PC-9 (cell line): ENCODE measurements at regions of chr2 and their contacts with region 1.

Region 1: DNA sequence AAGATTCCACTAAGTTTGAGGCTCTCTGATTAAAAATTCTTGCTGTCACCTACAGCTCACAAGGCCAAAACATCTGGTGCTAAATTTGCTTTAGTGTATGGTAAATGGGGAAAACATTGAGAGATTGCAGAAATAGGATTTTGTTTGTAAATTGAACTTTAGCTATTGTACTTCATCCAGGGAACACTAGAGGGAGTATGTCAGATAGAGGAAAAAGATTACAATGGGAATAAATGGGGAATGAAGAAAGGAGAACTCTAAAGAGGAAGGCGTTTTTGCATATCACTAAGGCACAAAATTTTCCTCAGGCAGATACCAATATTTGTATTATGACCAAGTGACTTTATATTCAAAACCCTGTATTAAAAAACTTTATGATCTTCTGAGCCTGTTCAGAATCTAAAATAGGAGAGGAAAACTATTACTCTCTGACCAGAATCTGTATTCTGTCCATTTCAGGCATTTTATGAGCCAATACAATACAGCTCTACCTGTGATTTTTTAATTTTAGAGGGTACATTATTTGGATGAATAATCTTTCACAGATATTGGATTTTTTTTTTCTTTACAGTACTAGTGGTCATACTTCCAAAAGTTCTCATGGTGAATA is 52.3 kb upstream of the ITGB6 start:
- DNase-seq: no peak
- H3K4me3 ChIP-seq: no peak overlapping the region
- H3K27ac ChIP-seq: no peak overlapping the region
- H3K4me1 ChIP-seq: peaks cover 20% of the 10 kb centered on the region
- H3K27me3 ChIP-seq: no peaks in the 10 kb centered on the region
- CTCF ChIP-seq: peak; percentile 81

Region 2: DNA sequence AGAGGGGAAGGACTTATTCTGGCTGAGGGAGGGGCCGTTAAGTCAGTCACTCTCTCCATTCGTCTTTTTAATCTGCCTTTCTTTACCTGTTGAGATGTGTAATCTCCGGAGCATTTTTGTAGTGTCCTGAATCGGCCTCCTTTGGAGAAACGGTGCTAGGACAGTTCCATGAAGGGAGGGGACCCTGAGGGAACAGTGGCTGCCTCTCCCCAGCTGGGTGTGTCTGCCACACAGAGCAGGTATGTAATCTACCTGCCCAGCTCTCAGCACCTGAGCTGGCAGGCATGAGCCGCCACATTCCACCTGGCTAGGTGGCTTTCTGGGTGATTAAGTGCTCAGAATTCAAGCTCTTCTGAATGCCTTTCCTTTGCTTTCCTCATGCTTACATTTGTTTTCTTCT is 1097.1 kb before region 1 on chr2:
- CTCF ChIA-PET with region 1: no interaction called
- POLR2A ChIA-PET with region 1: interaction called, 10 read pairs
- intact Hi-C with region 1: no loop called
- DNase-seq: peak; percentile 79 to 92
- H3K4me3 ChIP-seq: peak overlapping the region; percentile 20; the same call in 1 of the 2 replicates
- H3K27ac ChIP-seq: peak overlapping the region; percentile 86
- H3K4me1 ChIP-seq: peaks cover 61% of the 10 kb centered on the region
- H3K27me3 ChIP-seq: no peaks in the 10 kb centered on the region
- CTCF ChIP-seq: no peak

Region 3: GRCh38 chr2:160224060-160224459 is 28.3 kb before region 1 on chr2:
- CTCF ChIA-PET with region 1: no interaction called
- POLR2A ChIA-PET with region 1: interaction called, 5 read pairs
- intact Hi-C with region 1: loop called (anchors 2 kb)
- DNase-seq: peak in 1 of 2 experiments; percentile 93
- H3K4me3 ChIP-seq: no peak overlapping the region
- H3K27ac ChIP-seq: peak overlapping the region; percentile 100
- H3K4me1 ChIP-seq: peaks cover 98% of the 10 kb centered on the region
- H3K27me3 ChIP-seq: no peaks in the 10 kb centered on the region
- CTCF ChIP-seq: no peak

Region 4: DNA sequence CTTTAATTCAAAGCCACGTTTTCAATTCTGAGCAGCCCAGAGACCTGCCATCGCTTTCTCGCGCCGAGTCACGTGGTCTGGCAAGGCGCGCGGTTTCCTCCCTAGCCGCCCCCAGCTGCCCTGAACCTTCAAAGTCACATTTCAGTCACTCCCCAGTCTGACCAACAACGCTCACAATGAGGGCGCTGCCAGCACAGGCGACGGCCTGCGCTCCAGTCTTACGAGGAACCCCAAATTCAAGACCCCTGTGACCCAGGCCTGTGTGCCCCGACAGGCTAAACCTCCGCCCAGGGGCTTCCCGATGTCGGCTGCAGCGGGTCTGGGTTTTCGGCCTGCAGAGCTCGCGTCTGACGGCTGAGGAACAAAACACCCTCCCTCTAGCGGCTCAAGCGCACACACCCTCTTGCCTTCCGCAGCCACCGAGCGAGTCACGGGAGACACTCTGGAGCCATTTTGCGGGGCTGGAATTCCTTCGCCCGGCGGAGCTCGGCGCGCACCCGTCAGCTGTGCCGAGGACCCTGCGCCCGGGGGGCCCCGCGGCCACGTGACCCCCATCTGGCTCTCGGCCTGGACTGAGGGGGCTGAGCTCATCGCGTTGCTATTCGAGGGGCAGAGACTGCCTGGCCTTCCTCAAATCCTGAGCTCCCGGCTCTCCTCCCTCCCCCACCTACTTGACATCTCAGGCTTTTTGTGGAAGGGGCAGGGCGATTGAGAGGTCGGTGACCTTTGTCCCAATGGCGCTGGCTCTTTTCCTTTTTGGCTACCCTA is 17.6 kb after region 1 on chr2:
- CTCF ChIA-PET with region 1: interaction called, 8 read pairs
- POLR2A ChIA-PET with region 1: no interaction called
- intact Hi-C with region 1: loop called (anchors 2 kb)
- DNase-seq: peak; percentile 78
- H3K4me3 ChIP-seq: peak overlapping the region; percentile 52; the same call in 1 of the 2 replicates
- H3K27ac ChIP-seq: peak overlapping the region; percentile 86
- H3K4me1 ChIP-seq: peaks cover 26% of the 10 kb centered on the region
- H3K27me3 ChIP-seq: no peaks in the 10 kb centered on the region
- CTCF ChIP-seq: peak; percentile 59

Region 5: DNA sequence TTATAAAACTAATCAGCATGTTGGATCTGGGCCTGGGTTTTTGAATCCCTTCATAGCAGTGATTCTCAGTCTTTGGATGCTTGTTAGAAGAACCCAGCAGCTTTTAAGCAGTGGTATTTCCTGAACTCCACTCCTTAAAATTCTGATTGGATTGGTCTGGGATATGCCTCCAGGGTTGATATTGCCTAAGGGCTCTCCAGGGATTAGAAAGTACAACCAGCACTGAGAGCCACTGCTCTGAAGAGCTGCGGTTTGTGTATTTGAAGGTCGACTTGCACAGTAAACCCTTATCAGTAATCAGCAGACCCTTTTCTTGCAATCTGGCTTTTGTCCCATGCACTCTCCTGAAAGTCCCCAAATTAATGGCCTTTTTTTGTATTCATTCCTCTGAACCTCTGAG is 258.2 kb after region 1 on chr2:
- CTCF ChIA-PET with region 1: no interaction called
- POLR2A ChIA-PET with region 1: no interaction called
- intact Hi-C with region 1: no loop called
- DNase-seq: no peak
- H3K4me3 ChIP-seq: no peak overlapping the region
- H3K27ac ChIP-seq: no peak overlapping the region
- H3K4me1 ChIP-seq: no peaks in the 10 kb centered on the region
- H3K27me3 ChIP-seq: no peaks in the 10 kb centered on the region
- CTCF ChIP-seq: no peak

Region 6: DNA sequence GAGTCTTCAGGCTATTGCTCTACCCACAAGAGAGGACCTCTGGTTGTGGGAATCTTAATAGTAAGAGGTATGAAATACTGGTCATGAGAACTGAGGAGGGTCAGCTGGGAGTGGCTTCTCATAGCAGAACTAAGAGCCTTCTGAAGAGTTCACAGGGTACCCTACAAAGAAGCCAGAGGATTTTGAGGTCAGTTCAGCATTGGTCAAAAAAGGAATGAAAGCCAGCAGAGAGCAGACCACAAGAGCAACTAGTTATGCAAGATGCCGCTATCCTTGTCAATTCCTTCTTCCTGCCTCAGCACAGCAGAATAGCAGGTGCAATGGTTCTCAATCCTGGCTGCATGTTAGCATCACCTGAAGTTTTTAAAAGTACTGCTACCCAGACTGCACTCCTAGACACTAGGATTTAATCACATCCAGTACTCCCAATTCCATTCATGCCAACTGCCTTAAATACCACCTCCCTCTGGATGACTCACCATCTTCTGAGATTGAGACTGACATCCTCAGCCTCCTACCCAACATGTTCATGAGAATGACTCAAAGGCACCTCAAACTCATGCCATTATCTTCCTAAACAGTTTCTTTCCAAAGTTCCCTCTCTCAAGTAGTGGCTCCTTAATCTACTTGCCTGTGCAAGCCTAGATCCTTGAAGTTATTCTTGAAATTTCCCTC is 322.2 kb after region 1 on chr2:
- CTCF ChIA-PET with region 1: no interaction called
- POLR2A ChIA-PET with region 1: no interaction called
- intact Hi-C with region 1: no loop called
- DNase-seq: peak in 1 of 2 experiments; percentile 38
- H3K4me3 ChIP-seq: no peak overlapping the region
- H3K27ac ChIP-seq: no peak overlapping the region
- H3K4me1 ChIP-seq: no peaks in the 10 kb centered on the region
- H3K27me3 ChIP-seq: no peaks in the 10 kb centered on the region
- CTCF ChIP-seq: no peak

Region 7: DNA sequence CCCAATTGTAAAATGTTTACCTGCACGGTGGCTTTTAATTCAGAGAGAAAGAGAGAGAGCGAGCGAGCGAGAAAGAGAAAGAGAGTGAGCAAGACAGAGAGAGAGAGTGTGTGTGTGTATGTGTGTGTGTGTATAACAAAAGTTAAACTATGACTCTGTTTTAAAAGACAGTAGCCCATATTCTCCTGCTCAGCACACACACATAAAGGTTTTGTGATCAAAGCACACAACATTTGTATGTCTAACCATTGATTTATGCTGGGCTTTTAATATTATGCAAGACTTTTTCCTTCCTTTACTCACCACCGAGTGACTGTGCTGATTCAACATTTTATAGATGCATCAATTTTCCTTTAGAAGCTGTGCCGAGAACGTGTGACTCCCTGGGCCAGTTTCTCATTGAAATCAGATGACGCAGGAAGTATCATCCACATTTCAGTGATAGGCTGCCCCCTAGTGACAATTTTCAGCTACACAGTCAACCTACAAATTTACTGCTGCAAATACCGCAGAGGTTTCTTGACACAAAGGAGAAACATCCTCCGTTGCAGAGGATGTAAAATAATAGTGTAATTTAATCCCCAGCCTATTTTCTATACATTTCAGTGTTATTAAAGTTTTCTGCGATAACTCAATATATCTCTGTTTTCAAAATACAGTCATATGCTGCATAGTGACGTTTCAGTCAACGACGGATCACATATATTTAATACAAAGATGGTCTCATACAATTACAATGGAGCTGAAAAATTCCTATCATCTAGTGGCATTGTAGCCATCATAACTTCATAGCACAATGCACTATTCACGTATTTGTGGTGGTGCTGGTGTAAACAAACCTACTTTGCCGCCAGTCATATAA is 742.0 kb after region 1 on chr2:
- CTCF ChIA-PET with region 1: no interaction called
- POLR2A ChIA-PET with region 1: no interaction called
- intact Hi-C with region 1: loop called (anchors 10 kb)
- DNase-seq: peak; percentile 48 to 61
- H3K4me3 ChIP-seq: no peak overlapping the region
- H3K27ac ChIP-seq: no peak overlapping the region
- H3K4me1 ChIP-seq: no peaks in the 10 kb centered on the region; the same call in 1 of the 2 replicates
- H3K27me3 ChIP-seq: no peaks in the 10 kb centered on the region
- CTCF ChIP-seq: peak; percentile 81